Activated naive CD8-positive, alpha-beta T cell treated with anti-CD3 and anti-CD28 coated beads, Interleukin-2, amount 10 ng/mL, durations not matched to agents 7 days and 5 days (primary cell): ENCODE measurements at regions of chr12 and their contacts with region 1.

Region 1: DNA sequence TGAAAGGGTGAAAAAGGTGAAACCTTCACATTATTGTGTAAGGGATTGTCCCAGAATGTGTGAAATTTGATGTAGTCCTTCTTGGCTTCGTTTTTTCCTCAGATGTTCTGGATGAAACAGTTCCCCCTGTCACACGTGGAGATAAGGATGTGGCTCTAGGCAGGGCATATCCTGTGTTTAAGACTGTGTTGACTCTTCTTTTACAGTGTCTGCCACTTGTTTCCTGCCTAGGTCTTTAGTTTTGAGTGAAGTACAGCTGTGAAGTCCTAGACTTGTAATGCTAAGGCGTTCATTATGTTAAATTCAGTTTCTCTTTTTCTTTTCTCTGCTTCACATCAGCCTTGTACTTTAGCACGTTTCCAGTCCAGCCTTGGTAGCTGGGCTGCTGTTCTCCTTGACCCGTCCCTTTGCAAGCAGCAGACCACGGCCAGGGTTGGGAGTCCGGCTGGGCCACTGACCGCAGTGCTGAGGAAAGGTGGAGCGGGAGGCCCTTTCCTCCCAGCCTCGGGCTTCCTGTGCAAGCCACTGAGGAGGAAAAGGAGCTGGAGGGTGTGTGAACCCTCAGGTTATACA is 59.1 kb downstream of the RASSF3 start:
- DNase-seq: peak; percentile 68
- ATAC-seq: peak; percentile 93
- H3K4me3 Mint-ChIP-seq: peak overlapping the region; percentile 91
- H3K27ac Mint-ChIP-seq: peak overlapping the region; percentile 97
- H3K4me1 Mint-ChIP-seq: peaks cover 79% of the 10 kb centered on the region
- H3K27me3 Mint-ChIP-seq: no peaks in the 10 kb centered on the region

Region 2: DNA sequence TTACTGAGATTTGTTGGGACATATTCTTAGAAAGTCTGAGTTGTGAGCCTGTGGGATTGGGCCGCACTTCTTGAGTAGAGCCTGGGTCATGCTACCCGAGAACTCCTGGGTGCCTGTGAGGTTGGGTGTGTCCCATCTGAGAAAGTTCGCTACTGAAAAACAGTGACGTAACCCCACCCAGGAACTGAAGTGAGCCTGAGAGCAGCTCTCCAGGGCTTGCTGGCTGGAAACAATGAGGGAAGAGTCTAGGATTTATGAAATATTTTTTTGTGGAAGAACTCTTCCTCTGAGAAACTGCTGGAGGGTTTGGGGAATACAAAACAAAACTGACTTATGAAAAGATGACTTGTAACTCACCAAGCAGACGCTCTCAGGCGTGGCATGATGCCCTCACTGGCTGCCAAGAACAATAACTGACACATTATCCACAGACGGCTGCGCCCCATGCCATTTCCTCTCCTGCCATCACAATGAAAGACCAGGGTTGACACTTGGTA is 10.2 kb after region 1 on chr12:
- POLR2A ChIA-PET with region 1: interaction called, 19 read pairs
- DNase-seq: no peak
- ATAC-seq: peak; percentile 59
- H3K4me3 Mint-ChIP-seq: peak overlapping the region; percentile 82
- H3K27ac Mint-ChIP-seq: peak overlapping the region; percentile 90
- H3K4me1 Mint-ChIP-seq: peaks cover 74% of the 10 kb centered on the region
- H3K27me3 Mint-ChIP-seq: no peaks in the 10 kb centered on the region

Region 3: GRCh38 chr12:64687816-64688215 is 18.5 kb after region 1 on chr12:
- POLR2A ChIA-PET with region 1: interaction called, 18 read pairs
- DNase-seq: no peak
- ATAC-seq: peak; percentile 12
- H3K4me3 Mint-ChIP-seq: peak overlapping the region; percentile 64
- H3K27ac Mint-ChIP-seq: peak overlapping the region; percentile 81
- H3K4me1 Mint-ChIP-seq: peaks cover 65% of the 10 kb centered on the region
- H3K27me3 Mint-ChIP-seq: no peaks in the 10 kb centered on the region

Region 4: DNA sequence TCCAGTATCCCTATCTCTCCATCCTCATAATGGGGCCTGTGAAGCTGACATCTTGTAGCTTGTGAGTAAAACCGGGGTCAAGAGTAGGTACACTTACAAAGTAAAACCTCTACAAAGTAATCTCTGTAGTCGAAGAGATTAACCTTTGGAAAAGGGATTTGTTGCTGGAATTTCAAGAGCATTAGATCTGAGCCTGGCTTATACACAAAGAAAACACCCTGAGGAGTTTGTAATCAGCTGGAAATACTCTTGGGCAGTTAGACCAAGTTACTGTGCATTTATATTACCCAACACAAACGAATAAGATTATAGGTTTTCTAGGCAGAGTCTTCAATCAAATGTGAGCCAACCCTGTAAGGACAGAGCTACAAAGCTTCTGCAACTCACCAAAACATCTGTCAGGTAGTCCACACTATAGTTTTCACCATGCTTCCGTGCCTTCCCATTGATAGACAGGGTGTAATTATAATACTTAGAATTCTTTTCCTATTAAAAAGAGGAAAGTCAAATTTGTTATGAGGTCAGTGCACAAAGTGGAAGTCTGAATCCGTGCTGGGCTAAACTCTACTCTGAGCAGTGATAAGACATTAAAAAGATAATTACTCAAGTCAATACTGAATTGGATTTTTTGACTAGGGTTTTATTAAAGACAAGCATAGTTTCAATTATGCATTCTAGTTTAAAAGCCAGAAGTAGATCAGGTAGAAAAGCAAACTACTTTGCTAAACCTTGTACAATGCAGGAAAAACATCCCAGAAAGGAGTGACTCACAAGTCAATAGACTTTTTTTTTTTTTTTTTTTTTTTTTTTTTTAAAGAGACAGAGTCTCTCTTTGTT is 75.3 kb after region 1 on chr12:
- POLR2A ChIA-PET with region 1: no interaction called
- DNase-seq: no peak
- ATAC-seq: no peak
- H3K4me3 Mint-ChIP-seq: no peak overlapping the region
- H3K27ac Mint-ChIP-seq: no peak overlapping the region
- H3K4me1 Mint-ChIP-seq: peaks cover 2% of the 10 kb centered on the region
- H3K27me3 Mint-ChIP-seq: no peaks in the 10 kb centered on the region